Psoas muscle (tissue), 8 donors: ENCODE measurements at regions of chr4 and their contacts with region 1.

Region 1: GRCh38 chr4:100517864-100518341 is at the start of gene EMCN:
- DNase-seq: no peak
- ATAC-seq: no peak
- H3K4me3 ChIP-seq: peak within 1 kb of the TSS; percentile 61
- H3K27ac ChIP-seq: peak within 1 kb of the TSS; percentile 44
- H3K4me1 ChIP-seq: no peaks in the 10 kb centered on the region
- H3K27me3 ChIP-seq: no peaks in the 10 kb centered on the region
- CTCF ChIP-seq: no peak
- total RNA-seq, gene EMCN: 7.8 to 25.0 (median 13.2) TPM

Region 2: GRCh38 chr4:100591161-100591876 is 73.4 kb after region 1 on chr4:
- intact Hi-C with region 1: loop called in 1 of 2 experiments (anchors 5 kb)
- DNase-seq: peak in 1 of 2 donors; percentile 15
- ATAC-seq: peak; percentile 62 to 75 (median 69)
- H3K4me3 ChIP-seq: no peak overlapping the region
- H3K27ac ChIP-seq: peak overlapping the region; percentile 6
- H3K4me1 ChIP-seq: peaks cover 17% of the 10 kb centered on the region
- H3K27me3 ChIP-seq: no peaks in the 10 kb centered on the region
- CTCF ChIP-seq: no peak